ENCODE measurements at regions of chrX and their contacts with region 1.

Region 1: GRCh38 chrX:40108959-40109287 is 11.2 kb upstream of the BCOR start:
- DNase-seq: no peak
- ATAC-seq: peak; percentile 61
- H3K4me3 ChIP-seq: peak overlapping the region; percentile 45
- H3K27ac ChIP-seq: peak overlapping the region; percentile 70; the same call in 1 of the 2 replicates
- H3K4me1 ChIP-seq: peaks cover 2% of the 10 kb centered on the region; the same call in 1 of the 2 replicates
- H3K27me3 ChIP-seq: no peaks in the 10 kb centered on the region
- CTCF ChIP-seq: no peak

Region 2: DNA sequence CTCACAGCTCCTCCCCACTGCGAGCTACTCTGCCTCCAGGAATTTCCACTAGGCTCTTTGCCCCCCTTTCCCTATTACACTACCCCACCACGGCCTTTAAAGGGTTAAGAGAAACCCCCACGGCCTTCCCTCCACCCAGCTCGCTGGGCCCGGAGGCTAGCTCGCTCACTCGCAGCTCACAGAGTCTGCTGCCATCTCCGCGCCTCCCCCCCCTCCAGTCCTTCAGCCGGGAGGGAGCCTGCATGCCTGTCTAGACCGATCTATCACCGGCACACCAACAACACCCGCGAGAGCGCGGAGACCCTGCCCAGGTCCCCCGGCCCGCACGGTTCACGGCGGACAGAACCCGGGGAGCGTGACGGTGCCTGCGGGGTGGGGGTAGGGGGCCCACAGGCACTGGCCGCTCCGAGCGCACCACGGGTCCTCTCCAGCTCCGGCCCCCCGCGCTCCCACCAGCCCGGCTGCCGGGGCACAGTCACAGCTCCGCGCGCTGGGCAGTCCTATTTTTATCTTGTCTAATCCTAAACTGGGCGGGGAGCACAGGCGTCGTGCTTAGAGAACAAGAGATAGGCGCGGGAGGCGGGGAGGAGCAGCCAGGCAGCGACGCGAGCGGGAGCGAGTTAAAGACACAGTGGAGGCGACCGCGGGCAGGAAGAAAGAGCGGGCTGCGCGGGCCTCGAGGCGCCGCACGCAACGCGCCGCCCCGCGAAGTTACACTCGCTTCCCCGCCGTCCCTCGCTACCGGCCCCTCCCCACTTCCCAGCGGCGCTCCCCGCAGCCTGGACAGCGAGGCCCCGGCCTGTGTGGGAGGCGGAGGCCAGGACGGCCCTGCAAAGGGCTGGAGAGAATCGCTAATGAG is 14.7 kb before region 1 on chrX:
- CTCF ChIA-PET with region 1: no interaction called
- POLR2A ChIA-PET with region 1: interaction called, 14 read pairs
- in situ Hi-C with region 1: no loop called
- intact Hi-C with region 1: no loop called
- DNase-seq: no peak
- ATAC-seq: no peak
- H3K4me3 ChIP-seq: peak overlapping the region; percentile 53 to 64
- H3K27ac ChIP-seq: peak overlapping the region; percentile 73; the same call in 1 of the 2 replicates
- H3K4me1 ChIP-seq: no peaks in the 10 kb centered on the region; the same call in 1 of the 2 replicates
- H3K27me3 ChIP-seq: no peaks in the 10 kb centered on the region
- CTCF ChIP-seq: no peak

Region 3: DNA sequence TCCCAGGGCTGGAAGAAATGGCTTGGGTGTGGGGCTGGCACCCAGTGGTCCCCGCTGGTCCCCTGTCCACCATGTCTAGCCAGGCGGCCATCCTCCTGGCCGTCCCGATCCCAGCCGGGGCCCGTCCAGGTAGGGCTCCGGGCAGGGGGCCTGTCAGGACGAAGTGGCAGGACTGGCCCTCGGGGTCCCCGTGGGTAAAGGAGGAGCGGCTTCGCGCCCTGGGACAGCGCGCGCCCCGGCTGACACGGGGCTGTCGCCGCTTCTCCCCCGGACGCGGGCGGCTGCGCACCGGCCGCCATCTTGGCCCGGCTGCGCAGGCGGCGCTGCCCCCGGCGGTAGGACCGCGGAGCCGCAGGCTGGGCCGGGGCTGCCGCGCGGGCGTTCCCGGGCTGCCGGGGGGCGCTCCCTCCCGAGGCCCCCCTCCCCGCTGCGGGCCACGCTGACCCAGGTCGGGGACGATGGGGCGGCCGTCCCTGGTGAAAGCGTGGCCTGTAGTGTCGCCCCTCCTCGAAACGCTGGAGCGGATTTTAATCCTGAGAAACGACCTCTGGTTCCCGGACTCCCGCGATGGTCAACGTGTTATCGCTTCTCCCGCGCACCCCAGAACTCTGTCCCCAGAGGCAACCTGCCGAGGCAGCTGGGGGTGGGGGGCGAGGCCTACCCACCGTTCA is 49.2 kb after region 1 on chrX:
- CTCF ChIA-PET with region 1: no interaction called
- POLR2A ChIA-PET with region 1: no interaction called
- in situ Hi-C with region 1: no loop called
- intact Hi-C with region 1: loop called (anchors 5 kb)
- DNase-seq: no peak
- ATAC-seq: peak; percentile 55
- H3K4me3 ChIP-seq: peak overlapping the region; percentile 23 to 37
- H3K27ac ChIP-seq: peak overlapping the region; percentile 82
- H3K4me1 ChIP-seq: peaks cover 11% of the 10 kb centered on the region
- H3K27me3 ChIP-seq: no peaks in the 10 kb centered on the region
- CTCF ChIP-seq: peak; percentile 69

Region 4: DNA sequence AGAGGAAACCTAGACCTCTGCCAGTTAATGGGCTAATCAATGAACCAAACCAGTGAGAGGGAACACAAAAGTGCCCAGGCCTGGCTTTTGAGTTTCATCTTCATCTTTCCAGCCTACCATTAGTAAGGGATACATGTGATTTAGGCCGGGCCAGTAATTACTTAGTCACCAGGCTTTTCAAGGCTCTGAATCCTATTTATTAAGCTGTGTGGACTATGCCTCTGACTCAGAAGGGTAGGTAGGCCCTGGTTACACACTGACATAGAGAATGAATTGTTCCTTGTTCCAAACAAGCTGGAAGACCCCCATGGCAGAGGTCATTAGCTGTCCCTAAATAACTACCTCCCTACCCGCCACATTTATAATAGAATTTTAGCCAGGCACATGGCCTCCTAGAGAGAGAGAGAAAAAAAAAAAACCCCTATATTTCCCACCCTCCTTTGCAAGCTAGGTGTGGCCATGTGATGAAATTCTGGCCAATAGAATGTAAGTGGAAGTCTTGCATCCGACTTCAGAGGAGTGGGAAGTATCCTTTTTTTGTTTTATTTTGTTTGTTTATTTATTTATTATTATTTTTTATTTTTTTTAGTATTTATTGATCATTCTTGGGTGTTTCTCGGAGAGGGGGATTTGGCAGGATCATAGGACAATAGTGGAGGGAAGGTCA is 101.2 kb after region 1 on chrX:
- CTCF ChIA-PET with region 1: no interaction called
- POLR2A ChIA-PET with region 1: no interaction called
- in situ Hi-C with region 1: no loop called
- intact Hi-C with region 1: no loop called
- DNase-seq: no peak
- ATAC-seq: no peak
- H3K4me3 ChIP-seq: no peak overlapping the region
- H3K27ac ChIP-seq: no peak overlapping the region
- H3K4me1 ChIP-seq: no peaks in the 10 kb centered on the region
- H3K27me3 ChIP-seq: no peaks in the 10 kb centered on the region
- CTCF ChIP-seq: no peak

Region 5: DNA sequence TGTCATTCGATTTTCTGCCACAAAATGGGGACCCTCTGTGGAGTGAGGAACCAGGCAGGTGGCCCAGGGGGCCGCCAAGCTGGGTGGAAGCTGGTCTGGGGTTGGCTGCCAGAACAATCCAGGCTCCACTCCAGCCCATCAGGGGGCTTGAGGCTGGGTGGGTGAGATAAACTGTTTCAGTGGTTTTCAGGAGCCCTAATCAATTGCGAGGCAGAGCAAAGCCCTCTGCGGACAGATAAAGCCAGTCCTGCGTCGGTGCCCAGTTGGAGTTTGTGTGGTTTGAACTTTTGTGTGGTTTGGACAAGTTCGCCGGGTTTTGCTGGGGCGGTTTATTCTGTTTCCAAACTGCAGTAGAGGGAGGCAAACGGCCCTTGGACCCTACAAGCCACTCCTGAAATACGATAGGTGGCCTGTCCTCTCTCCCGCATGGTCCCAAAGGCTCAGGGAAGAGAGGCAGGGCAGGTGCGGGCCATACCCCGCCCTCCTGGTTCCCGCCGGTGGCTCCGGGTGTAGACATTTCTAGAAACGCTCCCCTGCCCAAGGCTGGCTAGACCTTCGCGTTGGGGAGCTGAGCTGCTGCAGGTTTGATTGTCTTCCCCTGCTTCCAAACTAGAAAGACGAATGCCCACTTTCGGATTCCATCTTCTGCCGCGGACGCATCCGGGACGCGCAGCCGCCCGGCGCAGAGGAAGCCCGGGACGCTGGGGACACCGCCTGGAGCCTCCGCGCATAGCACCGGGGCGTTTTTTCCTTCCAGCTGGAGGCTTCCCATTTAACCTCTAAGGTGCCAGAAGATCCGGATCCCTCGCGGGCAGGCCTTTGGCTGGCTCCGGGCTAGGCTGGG is 157.8 kb after region 1 on chrX:
- CTCF ChIA-PET with region 1: no interaction called
- POLR2A ChIA-PET with region 1: no interaction called
- in situ Hi-C with region 1: no loop called
- intact Hi-C with region 1: loop called (anchors 10 kb)
- DNase-seq: no peak
- ATAC-seq: peak; percentile 96
- H3K4me3 ChIP-seq: peak overlapping the region; percentile 39 to 53
- H3K27ac ChIP-seq: peak overlapping the region; percentile 61
- H3K4me1 ChIP-seq: peaks cover 4% of the 10 kb centered on the region
- H3K27me3 ChIP-seq: no peaks in the 10 kb centered on the region
- CTCF ChIP-seq: peak; percentile 85

Measured in Panc1 (cell line).